Dorsolateral prefrontal cortex (tissue), 120 donors: ENCODE measurements at regions of chr12 and their contacts with region 1.

Region 1: GRCh38 chr12:51341259-51342007 is 5.0 kb downstream of the CELA1 start:
- DNase-seq: peak in 6 of 10 donors; percentile 50 to 80 (median 58)
- H3K4me3 ChIP-seq: peak overlapping the region in 55 of 59 donors; percentile 3 to 56 (median 39)
- H3K27ac ChIP-seq: peak overlapping the region in 25 of 59 donors; percentile 16 to 86 (median 60)
- H3K27me3 ChIP-seq: no peaks in the 10 kb centered on the region
- CTCF ChIP-seq: peak; percentile 91 to 99 (median 97)

Region 2: GRCh38 chr12:50825372-50825838 is 516.0 kb before region 1 on chr12:
- intact Hi-C with region 1: loop called in 1 of 2 experiments (anchors 5 kb)
- DNase-seq: no peak
- H3K4me3 ChIP-seq: peak overlapping the region in 3 of 59 donors; percentile 6 to 20 (median 10)
- H3K27ac ChIP-seq: peak overlapping the region in 29 of 59 donors; percentile 1 to 65 (median 32)
- H3K27me3 ChIP-seq: no peaks in the 10 kb centered on the region
- CTCF ChIP-seq: peak; percentile 52 to 84 (median 70)

Region 3: GRCh38 chr12:51047655-51048540 is 293.5 kb before region 1 on chr12 and contains the start of gene LETMD1:
- intact Hi-C with region 1: loop called (anchors 5 kb)
- DNase-seq: peak; percentile 85 to 98 (median 96)
- H3K4me3 ChIP-seq: peak within 1 kb of the TSS; percentile 55 to 100 (median 83)
- H3K27ac ChIP-seq: peak within 1 kb of the TSS; percentile 57 to 100 (median 96)
- H3K27me3 ChIP-seq: no peaks in the 10 kb centered on the region
- CTCF ChIP-seq: peak; percentile 49 to 97 (median 90)
- total RNA-seq, gene LETMD1: 43.1 to 97.4 (median 70.1) TPM

Region 4: DNA sequence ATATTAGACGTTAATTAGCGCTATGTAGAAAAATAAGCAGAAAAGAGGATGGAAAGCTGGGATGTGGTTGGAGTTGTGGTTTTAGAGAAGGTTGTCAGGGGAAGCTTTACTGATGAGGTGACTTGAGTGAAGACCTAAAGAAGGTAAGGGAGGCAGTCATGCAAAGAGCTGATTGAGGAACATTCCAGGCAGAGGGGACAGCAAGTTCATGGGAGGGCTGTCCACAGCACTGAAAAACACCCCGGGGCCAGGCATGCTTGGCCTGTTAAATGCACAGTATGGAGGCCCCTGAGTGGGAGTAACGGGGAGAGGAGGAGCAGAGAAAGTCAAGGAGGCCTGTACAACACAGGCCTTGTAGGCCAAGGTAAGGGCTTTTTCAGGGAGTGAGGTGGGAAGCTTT is 86.8 kb before region 1 on chr12:
- intact Hi-C with region 1: loop called in 1 of 2 experiments (anchors 10 kb)
- DNase-seq: no peak
- H3K4me3 ChIP-seq: no peak overlapping the region
- H3K27ac ChIP-seq: no peak overlapping the region
- H3K27me3 ChIP-seq: no peaks in the 10 kb centered on the region
- CTCF ChIP-seq: no peak

Region 5: GRCh38 chr12:51270067-51270970 is 71.1 kb before region 1 on chr12 and contains the start of gene SMAGP:
- intact Hi-C with region 1: loop called in 1 of 2 experiments (anchors 5 kb)
- DNase-seq: peak in 3 of 10 donors; percentile 14 to 48 (median 40)
- H3K4me3 ChIP-seq: peak within 1 kb of the TSS; percentile 48 to 89 (median 71)
- H3K27ac ChIP-seq: peak within 1 kb of the TSS in 6 of 59 donors; percentile 1 to 75 (median 32)
- H3K27me3 ChIP-seq: peaks cover 0 to 26% (median 0%) of the 10 kb centered on the region in 45 donors
- CTCF ChIP-seq: peak in 8 of 56 donors; percentile 6 to 40 (median 12)
- total RNA-seq, gene SMAGP: 0.23 to 3.3 (median 1.4) TPM in 101 of 120 experiments, not detected in the others

Region 6: GRCh38 chr12:51549637-51550036 is 208.2 kb after region 1 on chr12:
- intact Hi-C with region 1: no loop called
- DNase-seq: no peak
- H3K4me3 ChIP-seq: no peak overlapping the region
- H3K27ac ChIP-seq: no peak overlapping the region
- H3K27me3 ChIP-seq: peaks cover 0 to 2% (median 0%) of the 10 kb centered on the region in 45 donors
- CTCF ChIP-seq: no peak